ENCODE measurements at regions of chr6 and their contacts with region 1.

Region 1: DNA sequence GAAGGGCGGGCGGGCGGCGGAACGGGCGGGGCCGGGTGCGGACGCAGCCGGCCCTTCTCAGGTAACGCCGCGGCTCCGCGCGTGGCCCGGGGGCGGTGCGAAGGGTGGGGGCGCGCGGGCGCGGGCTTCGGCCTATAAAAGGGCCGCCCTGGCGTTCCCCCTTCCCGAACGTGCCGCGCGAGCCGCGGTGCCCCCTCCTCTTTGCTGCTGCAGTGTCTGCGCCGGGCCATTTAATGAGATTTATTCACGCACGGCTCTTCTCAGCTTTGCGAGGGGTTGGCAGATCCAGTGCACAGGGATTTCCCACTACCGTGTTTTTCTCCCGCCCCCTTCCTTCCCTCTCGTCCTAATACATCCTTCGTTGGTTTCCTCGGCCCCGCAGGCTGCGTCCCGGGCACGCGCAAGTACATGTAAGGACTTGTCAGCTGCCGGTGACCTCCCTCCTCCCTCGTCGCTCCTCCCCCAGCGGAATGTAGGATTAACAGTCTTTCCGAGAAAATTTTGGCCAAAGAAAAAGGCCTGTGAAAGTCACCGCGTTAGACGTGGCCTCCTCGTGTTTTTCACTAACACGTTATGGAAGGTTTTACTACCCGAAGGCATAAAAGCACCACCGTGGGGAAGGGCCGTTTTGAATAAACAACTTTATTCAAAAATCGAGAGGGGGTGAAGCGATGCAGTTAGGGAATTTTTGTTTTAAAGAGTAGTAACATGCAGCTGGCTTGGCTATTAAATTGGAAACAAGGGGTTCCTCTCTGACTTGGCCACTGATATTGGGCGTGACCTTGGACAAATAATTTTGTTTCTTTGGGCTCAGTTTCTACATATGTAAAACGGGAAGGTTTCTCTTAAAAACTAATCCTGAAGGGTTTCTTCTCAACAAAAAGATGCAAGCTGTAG is 966 bp upstream of the REV3L start:
- DNase-seq: peak; percentile 76 to 96 (median 88)

Region 2: GRCh38 chr6:111259089-111259831 is 224.7 kb before region 1 on chr6:
- intact Hi-C with region 1: loop called (anchors 10 kb)
- DNase-seq: peak; percentile 94 to 100 (median 99)

Region 3: DNA sequence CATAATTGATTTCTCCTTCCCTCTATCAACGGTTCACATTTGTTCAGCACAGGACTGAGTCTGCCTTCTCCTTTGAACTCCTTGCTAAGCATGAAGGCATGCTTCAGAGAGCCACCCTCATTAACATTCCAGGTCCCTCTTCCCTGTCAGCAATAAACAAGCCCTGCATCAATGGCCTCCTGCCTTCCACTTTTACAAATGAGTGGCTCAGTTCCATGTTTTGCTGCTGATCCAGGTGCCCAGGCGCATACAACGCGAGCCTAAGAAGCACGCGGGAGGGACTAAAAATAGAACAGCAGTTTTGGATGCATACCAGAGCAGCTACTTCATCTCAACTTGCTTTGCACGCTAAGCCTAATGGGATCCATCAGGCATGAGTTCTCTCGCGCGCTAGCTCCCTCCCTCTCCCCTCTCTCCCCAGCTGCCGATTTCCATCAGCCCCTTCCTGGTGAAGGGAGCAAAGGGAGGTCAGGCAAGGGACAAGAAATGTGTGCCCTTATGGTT is 68.3 kb after region 1 on chr6:
- intact Hi-C with region 1: loop called (anchors 5 kb)
- DNase-seq: peak; percentile 29 to 89 (median 68)

Region 4: GRCh38 chr6:111605100-111605751 is 121.2 kb after region 1 on chr6:
- intact Hi-C with region 1: loop called (anchors 10 kb)
- DNase-seq: peak in 38 of 42 donors; percentile 21 to 78 (median 50)